Naive thymus-derived CD4-positive, alpha-beta T cell (primary cell): ENCODE measurements at regions of chr12 and their contacts with region 1.

Region 1: DNA sequence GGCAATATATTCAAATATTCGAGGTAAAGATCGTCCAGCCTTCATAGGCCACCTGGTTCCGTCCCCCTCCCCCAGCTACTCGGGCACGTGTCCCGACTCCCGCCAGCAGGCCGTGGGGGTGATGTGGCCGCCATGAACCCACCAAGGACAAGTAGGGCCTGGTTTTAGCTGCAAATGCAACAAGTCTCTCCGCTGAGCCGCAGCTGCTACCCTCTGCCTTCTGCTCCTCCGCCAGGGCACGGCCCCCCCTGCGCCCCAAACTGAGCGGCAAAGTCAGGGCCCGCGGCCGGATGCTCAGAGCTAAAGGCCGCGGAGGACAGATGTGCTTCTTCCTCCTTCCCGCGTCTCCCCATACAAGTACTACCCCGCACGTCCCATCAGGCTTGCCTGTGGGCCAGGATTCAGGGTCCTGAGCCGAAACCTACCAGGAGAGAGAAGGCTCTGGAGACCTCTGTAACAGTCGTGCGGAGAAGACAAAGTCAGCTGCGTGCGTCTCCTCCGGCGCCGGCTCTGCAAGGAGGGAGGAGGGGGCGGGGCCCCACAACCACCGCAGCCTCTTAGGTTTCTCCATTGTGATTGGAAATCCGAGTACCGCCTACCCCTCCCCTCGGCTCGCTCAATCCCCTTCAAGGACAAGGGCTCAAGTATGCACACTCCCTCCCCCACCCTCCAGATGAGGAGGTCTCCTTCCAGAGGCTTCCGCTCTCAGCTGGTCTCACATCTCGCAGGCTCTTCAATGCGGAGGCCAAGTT is at the start of gene LDHB:
- DNase-seq: peak; percentile 69 to 96 (median 91)
- ATAC-seq: peak; percentile 98
- H3K4me3 ChIP-seq: peak within 1 kb of the TSS; percentile 89
- H3K4me3 Mint-ChIP-seq: peak within 1 kb of the TSS; percentile 89 to 100 (median 97)
- H3K27ac ChIP-seq: peak within 1 kb of the TSS; percentile 83
- H3K27ac Mint-ChIP-seq: peak within 1 kb of the TSS; percentile 86 to 100 (median 95)
- H3K4me1 ChIP-seq: peaks cover 25 to 47% of the 10 kb centered on the region in 2 donors
- H3K4me1 Mint-ChIP-seq: peaks cover 36 to 70% (median 61%) of the 10 kb centered on the region in 7 donors
- H3K27me3 ChIP-seq: no peaks in the 10 kb centered on the region
- H3K27me3 Mint-ChIP-seq: peaks cover 0 to 8% (median 0%) of the 10 kb centered on the region in 5 donors
- total RNA-seq, gene LDHB: 630 to 1,306 (median 1,079) TPM

Region 2: GRCh38 chr12:21501379-21501956 is 156.0 kb before region 1 on chr12 and contains the starts of genes GOLT1B and RECQL:
- CTCF ChIA-PET with region 1: no interaction called
- POLR2A ChIA-PET with region 1: interaction called, 12 read pairs
- intact Hi-C with region 1: loop called (anchors 1 kb)
- DNase-seq: peak; percentile 67 to 96 (median 94)
- ATAC-seq: peak; percentile 98
- H3K4me3 ChIP-seq: peak within 1 kb of the TSS; percentile 68
- H3K4me3 Mint-ChIP-seq: no peak within 1 kb of the TSS
- H3K27ac ChIP-seq: peak within 1 kb of the TSS; percentile 87
- H3K27ac Mint-ChIP-seq: no peak within 1 kb of the TSS
- H3K4me1 ChIP-seq: peaks cover 20 to 25% of the 10 kb centered on the region in 2 donors
- H3K4me1 Mint-ChIP-seq: peaks cover 30 to 67% (median 55%) of the 10 kb centered on the region in 7 donors
- H3K27me3 ChIP-seq: no peaks in the 10 kb centered on the region
- H3K27me3 Mint-ChIP-seq: no peaks in the 10 kb centered on the region
- total RNA-seq, gene GOLT1B: 25.8 to 42.5 (median 31.7) TPM
- total RNA-seq, gene RECQL: 19.4 to 77.7 (median 43.2) TPM

Region 3: GRCh38 chr12:21613931-21614330 is 43.6 kb before region 1 on chr12:
- CTCF ChIA-PET with region 1: interaction called, 10 read pairs
- POLR2A ChIA-PET with region 1: interaction called, 87 read pairs
- intact Hi-C with region 1: loop called (anchors 1 kb)
- DNase-seq: no peak
- ATAC-seq: no peak
- H3K4me3 ChIP-seq: no peak overlapping the region
- H3K4me3 Mint-ChIP-seq: peak overlapping the region in 8 of 10 donors; percentile 36 to 82 (median 64)
- H3K27ac ChIP-seq: peak overlapping the region; percentile 61
- H3K27ac Mint-ChIP-seq: peak overlapping the region in 8 of 9 donors; percentile 84 to 98 (median 94)
- H3K4me1 ChIP-seq: peaks cover 25 to 46% of the 10 kb centered on the region in 2 donors
- H3K4me1 Mint-ChIP-seq: peaks cover 35 to 69% (median 60%) of the 10 kb centered on the region in 7 donors
- H3K27me3 ChIP-seq: no peaks in the 10 kb centered on the region
- H3K27me3 Mint-ChIP-seq: no peaks in the 10 kb centered on the region

Region 4: DNA sequence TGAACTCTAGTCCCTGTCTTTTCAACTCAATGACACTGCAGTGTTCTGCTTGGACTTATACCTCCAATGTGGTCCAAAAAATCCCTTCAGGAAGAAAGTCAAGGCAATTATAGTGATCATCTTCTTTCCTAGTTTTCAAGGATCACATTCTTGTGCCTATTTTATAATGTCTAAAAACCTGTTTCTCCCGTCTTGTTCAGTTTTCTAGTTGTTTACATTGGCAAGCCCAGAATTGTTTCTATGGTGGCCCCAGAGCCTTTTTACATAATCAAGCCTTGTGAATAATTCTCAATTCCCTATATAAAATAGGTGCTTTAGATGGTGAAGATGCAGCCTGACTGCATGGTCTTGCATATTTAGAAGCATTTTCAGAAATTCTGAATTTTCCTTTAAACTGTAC is 14.6 kb after region 1 on chr12:
- CTCF ChIA-PET with region 1: interaction called, 4 read pairs
- POLR2A ChIA-PET with region 1: interaction called, 242 read pairs
- intact Hi-C with region 1: loop called in 1 of 2 experiments (anchors 1 kb)
- DNase-seq: no peak
- ATAC-seq: no peak
- H3K4me3 ChIP-seq: no peak overlapping the region
- H3K4me3 Mint-ChIP-seq: no peak overlapping the region
- H3K27ac ChIP-seq: no peak overlapping the region
- H3K27ac Mint-ChIP-seq: peak overlapping the region in 1 of 9 donors; percentile 62
- H3K4me1 ChIP-seq: peaks cover 6 to 20% of the 10 kb centered on the region in 2 donors
- H3K4me1 Mint-ChIP-seq: peaks cover 10 to 39% (median 30%) of the 10 kb centered on the region in 7 donors
- H3K27me3 ChIP-seq: no peaks in the 10 kb centered on the region
- H3K27me3 Mint-ChIP-seq: peaks cover 0 to 25% (median 0%) of the 10 kb centered on the region in 5 donors

Region 5: GRCh38 chr12:22046090-22046967 is 388.8 kb after region 1 on chr12 and contains the start of gene CMAS:
- CTCF ChIA-PET with region 1: no interaction called
- POLR2A ChIA-PET with region 1: interaction called, 4 read pairs
- intact Hi-C with region 1: loop called (anchors 1 kb)
- DNase-seq: peak; percentile 49 to 76 (median 65)
- ATAC-seq: peak; percentile 93
- H3K4me3 ChIP-seq: peak within 1 kb of the TSS; percentile 82
- H3K4me3 Mint-ChIP-seq: peak within 1 kb of the TSS; percentile 80 to 99 (median 94)
- H3K27ac ChIP-seq: peak within 1 kb of the TSS; percentile 82
- H3K27ac Mint-ChIP-seq: peak within 1 kb of the TSS; percentile 35 to 95 (median 89)
- H3K4me1 ChIP-seq: peaks cover 10 to 15% of the 10 kb centered on the region in 2 donors
- H3K4me1 Mint-ChIP-seq: peaks cover 27 to 65% (median 48%) of the 10 kb centered on the region in 7 donors
- H3K27me3 ChIP-seq: no peaks in the 10 kb centered on the region
- H3K27me3 Mint-ChIP-seq: no peaks in the 10 kb centered on the region
- total RNA-seq, gene CMAS: 10.1 to 33.6 (median 19.4) TPM